PC-9 (cell line): ENCODE measurements at regions of chr7 and their contacts with region 1.

Region 1: GRCh38 chr7:107441581-107442422 is 28.1 kb upstream of the GPR22 start:
- DNase-seq: no peak
- H3K4me3 ChIP-seq: no peak overlapping the region
- H3K27ac ChIP-seq: no peak overlapping the region
- H3K4me1 ChIP-seq: no peaks in the 10 kb centered on the region
- H3K27me3 ChIP-seq: no peaks in the 10 kb centered on the region
- CTCF ChIP-seq: no peak

Region 2: DNA sequence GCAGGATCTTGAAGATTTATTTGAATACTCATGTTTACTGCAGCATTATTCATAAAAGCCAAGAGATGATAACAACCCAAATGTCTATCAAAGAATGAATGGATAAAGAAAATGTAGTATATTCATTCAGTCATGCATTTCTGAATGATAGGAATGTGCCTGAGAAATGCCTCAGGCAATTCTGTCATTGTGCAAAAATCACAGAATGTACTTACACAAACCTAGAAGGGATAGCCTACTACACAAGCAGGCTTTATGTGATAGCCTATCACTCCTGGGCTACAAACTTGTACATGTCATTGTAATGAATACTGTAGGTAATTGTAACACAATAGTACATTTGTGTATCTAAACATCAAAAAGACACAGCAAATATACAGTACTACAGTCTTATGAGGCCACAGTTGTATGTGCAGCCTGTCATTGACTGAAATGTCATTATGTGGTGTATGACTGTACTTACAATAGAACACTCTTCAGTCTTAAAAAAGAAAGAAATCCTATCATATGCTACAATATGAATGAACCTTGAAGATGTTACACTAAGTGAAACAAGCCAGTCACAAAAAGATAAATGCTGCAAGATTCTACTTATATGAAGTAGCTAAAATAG is 113.7 kb before region 1 on chr7:
- CTCF ChIA-PET with region 1: no interaction called
- POLR2A ChIA-PET with region 1: interaction called, 10 read pairs
- intact Hi-C with region 1: no loop called
- DNase-seq: peak; percentile 38 to 84
- H3K4me3 ChIP-seq: no peak overlapping the region
- H3K27ac ChIP-seq: no peak overlapping the region
- H3K4me1 ChIP-seq: peaks cover 13% of the 10 kb centered on the region; the same call in 1 of the 2 replicates
- H3K27me3 ChIP-seq: no peaks in the 10 kb centered on the region
- CTCF ChIP-seq: no peak

Region 3: DNA sequence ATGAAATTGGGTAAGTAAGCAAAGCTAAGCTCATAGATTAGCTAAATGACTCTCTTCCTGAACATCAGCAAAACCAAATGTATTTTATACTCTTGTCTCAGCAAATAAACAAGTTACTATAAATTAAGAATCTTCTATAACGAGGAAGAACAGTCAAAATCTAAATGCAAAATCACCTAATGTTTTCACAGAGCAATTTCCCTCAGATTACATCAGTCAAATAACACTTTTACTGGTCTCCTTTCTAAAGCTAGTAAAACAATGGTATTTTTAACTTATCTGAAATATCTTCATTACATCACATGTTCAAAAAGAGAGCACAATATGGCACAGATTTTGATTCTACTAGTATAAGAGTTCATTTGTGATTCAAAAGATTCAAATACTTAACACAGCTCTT is 11.6 kb after region 1 on chr7:
- CTCF ChIA-PET with region 1: no interaction called
- POLR2A ChIA-PET with region 1: no interaction called
- intact Hi-C with region 1: loop called (anchors 2 kb)
- DNase-seq: no peak
- H3K4me3 ChIP-seq: no peak overlapping the region
- H3K27ac ChIP-seq: no peak overlapping the region
- H3K4me1 ChIP-seq: no peaks in the 10 kb centered on the region
- H3K27me3 ChIP-seq: no peaks in the 10 kb centered on the region
- CTCF ChIP-seq: no peak

Region 4: GRCh38 chr7:107528466-107528865 is 86.7 kb after region 1 on chr7:
- CTCF ChIA-PET with region 1: no interaction called
- POLR2A ChIA-PET with region 1: no interaction called
- intact Hi-C with region 1: no loop called
- DNase-seq: peak; percentile 14 to 51
- H3K4me3 ChIP-seq: no peak overlapping the region
- H3K27ac ChIP-seq: no peak overlapping the region
- H3K4me1 ChIP-seq: peaks cover 12% of the 10 kb centered on the region
- H3K27me3 ChIP-seq: no peaks in the 10 kb centered on the region
- CTCF ChIP-seq: no peak